H1 (cell line): ENCODE measurements at regions of chr17 and their contacts with region 1.

Region 1: DNA sequence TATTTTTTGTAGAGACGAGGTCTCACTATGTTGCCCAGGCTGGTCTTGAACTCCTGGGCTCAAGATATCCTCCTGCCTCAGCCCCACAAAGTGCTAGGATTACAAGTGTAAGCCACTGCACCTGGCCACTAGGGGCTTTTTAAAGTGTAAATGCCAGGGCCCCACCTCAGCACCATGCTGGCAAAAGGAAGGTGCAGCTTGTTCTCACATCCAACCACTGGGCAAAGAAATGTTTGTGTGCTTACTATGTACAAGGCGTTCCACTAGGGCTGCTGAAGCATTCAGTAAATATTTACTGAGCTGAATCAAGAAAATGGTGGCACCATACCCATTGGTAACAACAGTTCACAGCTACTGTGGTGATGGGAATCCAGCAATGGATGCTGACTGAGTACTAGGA is 22.6 kb downstream of the COG1 start:
- DNase-seq: no peak
- H3K4me3 ChIP-seq: no peak overlapping the region
- H3K27ac ChIP-seq: no peak overlapping the region
- H3K4me1 ChIP-seq: peaks cover 0 to 4% (median 0%) of the 10 kb centered on the region in 4 experiments; a peak in 2 of 7 replicates
- H3K27me3 ChIP-seq: no peaks in the 10 kb centered on the region
- CTCF ChIP-seq: peak; percentile 34 to 51 (median 44)
- EP300 ChIP-seq: no peak
- POLR2A ChIP-seq: no peak
- RAD21 ChIP-seq: peak; percentile 9 to 31; a peak in 2 of 4 replicates

Region 2: GRCh38 chr17:73201215-73202069 is 14.0 kb before region 1 on chr17:
- CTCF ChIA-PET with region 1: interaction called, 11 read pairs
- POLR2A ChIA-PET with region 1: interaction called, 6 read pairs
- DNase-seq: no peak
- H3K4me3 ChIP-seq: no peak overlapping the region
- H3K27ac ChIP-seq: no peak overlapping the region
- H3K4me1 ChIP-seq: no peaks in the 10 kb centered on the region
- H3K27me3 ChIP-seq: no peaks in the 10 kb centered on the region
- CTCF ChIP-seq: no peak
- EP300 ChIP-seq: no peak
- POLR2A ChIP-seq: no peak
- RAD21 ChIP-seq: no peak

Region 3: DNA sequence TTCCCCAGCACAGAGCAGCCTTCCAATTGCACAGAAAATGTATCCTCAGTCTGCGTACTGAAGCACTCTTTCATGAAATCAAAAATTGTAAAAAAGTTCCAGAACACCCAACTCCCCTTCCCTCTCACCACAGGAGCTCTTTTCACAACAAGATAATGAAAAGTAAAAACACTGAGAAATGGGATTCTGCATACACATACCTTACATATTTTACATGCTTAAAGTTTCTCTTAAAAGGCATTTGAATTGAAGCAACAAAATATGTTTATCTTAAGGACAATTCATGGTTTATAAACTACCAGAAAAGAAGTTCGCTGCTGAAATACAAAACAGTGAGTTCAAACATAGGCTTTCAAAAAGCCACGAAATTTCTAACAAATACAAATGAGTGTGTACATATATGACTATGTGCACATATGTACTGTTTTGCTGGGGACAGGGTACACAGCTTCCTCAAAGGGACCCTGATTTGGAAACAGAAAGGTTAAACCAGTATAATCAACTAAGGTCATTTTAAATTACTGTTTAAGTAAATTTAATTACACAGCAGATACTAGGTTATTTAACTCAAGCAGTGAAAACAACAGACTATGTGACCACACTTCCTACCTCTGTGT is 11.2 kb after region 1 on chr17:
- CTCF ChIA-PET with region 1: interaction called, 22 read pairs
- POLR2A ChIA-PET with region 1: interaction called, 13 read pairs
- DNase-seq: no peak
- H3K4me3 ChIP-seq: peak overlapping the region in 1 of 4 experiments; percentile 32; a peak in 1 of 8 replicates
- H3K27ac ChIP-seq: no peak overlapping the region
- H3K4me1 ChIP-seq: peaks cover 0 to 14% (median 5%) of the 10 kb centered on the region in 4 experiments; a peak in 6 of 7 replicates
- H3K27me3 ChIP-seq: no peaks in the 10 kb centered on the region
- CTCF ChIP-seq: no peak
- EP300 ChIP-seq: no peak
- POLR2A ChIP-seq: no peak
- RAD21 ChIP-seq: no peak

Region 4: DNA sequence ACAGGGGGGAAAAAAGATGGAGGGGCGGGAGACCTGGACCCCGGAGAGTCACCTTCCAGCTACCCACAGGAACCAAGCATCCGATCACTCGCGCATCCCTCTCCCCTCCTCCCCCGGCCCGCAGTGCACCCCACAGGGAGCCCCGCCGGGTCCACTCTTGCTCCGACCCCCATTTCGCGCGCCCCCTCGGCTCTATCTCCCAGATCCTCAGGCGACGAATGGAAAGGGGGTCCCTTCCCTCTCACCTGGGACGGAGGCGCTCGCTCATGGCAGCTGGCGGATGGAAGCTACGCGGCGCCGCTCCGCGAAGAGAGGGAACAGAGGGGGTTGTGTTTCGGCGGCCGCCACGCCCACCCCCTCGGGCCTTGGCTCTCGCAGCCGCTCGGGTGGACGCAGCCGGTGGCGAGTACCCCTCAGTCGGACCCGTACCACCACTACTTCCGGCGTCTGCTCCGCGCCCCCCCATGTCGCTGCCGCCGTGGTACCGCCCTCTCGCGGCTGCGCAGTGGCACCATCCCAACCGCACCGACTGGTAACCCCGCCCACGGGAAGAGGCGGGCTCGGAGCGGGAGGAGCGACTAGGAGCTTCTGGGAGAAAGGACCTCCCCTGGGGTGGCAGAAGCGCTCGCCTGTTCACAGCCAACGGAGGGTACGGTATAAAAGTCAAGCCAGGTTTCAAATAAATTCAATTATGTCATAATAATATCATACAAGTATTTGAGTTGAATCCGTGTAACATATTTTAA is 16.6 kb after region 1 on chr17:
- CTCF ChIA-PET with region 1: interaction called, 22 read pairs
- POLR2A ChIA-PET with region 1: interaction called, 13 read pairs
- DNase-seq: peak; percentile 93 to 99
- H3K4me3 ChIP-seq: peak overlapping the region; percentile 90 to 94 (median 92)
- H3K27ac ChIP-seq: peak overlapping the region; percentile 74
- H3K4me1 ChIP-seq: peaks cover 0 to 9% (median 4%) of the 10 kb centered on the region in 4 experiments; a peak in 5 of 7 replicates
- H3K27me3 ChIP-seq: no peaks in the 10 kb centered on the region
- CTCF ChIP-seq: peak in 2 of 3 experiments; percentile 15 to 24; a peak in 1 of 4 replicates
- EP300 ChIP-seq: peak in 1 of 2 experiments; percentile 41; a peak in 1 of 3 replicates
- POLR2A ChIP-seq: peak; percentile 40 to 61
- RAD21 ChIP-seq: no peak